PC-9 (cell line): ENCODE measurements at regions of chr4 and their contacts with region 1.

Region 1: GRCh38 chr4:18440527-18441202 is 419.1 kb upstream of the LCORL start:
- DNase-seq: no peak
- H3K4me3 ChIP-seq: no peak overlapping the region
- H3K27ac ChIP-seq: no peak overlapping the region
- H3K4me1 ChIP-seq: no peaks in the 10 kb centered on the region
- H3K27me3 ChIP-seq: no peaks in the 10 kb centered on the region
- CTCF ChIP-seq: no peak

Region 2: DNA sequence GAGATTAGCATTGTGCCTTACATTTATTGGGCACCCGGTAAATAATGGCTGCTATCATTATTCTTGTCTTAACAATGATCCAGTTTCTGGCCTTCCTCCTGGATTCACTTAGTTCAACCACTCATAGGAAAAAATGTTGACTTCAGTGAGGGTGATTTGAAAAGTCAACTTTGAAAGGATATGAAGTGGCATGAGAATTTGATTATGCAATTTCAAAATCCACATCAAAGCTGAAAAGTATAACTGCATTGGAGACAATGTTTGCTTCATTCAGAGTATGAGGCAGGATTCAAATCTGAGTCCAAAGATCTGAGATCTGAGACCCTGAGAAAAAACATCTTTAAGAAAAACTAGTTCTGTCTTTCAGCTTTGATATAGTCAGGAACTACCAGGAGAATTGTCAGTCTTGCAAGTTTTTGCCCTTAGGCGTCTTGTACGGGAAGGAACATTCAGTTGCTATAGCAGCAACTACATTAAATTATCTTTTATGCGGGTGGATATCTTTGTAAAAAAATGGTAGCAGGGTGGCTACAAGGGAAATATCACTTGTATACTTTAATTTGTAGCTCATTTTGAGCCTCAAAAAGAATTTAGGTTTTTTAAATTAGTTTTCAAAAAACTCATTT is 168.4 kb after region 1 on chr4:
- CTCF ChIA-PET with region 1: no interaction called
- POLR2A ChIA-PET with region 1: interaction called, 21 read pairs
- intact Hi-C with region 1: no loop called
- DNase-seq: no peak
- H3K4me3 ChIP-seq: no peak overlapping the region
- H3K27ac ChIP-seq: no peak overlapping the region
- H3K4me1 ChIP-seq: no peaks in the 10 kb centered on the region
- H3K27me3 ChIP-seq: peaks cover 15% of the 10 kb centered on the region
- CTCF ChIP-seq: no peak